PC-9 (cell line): ENCODE measurements at regions of chr1 and their contacts with region 1.

Region 1: DNA sequence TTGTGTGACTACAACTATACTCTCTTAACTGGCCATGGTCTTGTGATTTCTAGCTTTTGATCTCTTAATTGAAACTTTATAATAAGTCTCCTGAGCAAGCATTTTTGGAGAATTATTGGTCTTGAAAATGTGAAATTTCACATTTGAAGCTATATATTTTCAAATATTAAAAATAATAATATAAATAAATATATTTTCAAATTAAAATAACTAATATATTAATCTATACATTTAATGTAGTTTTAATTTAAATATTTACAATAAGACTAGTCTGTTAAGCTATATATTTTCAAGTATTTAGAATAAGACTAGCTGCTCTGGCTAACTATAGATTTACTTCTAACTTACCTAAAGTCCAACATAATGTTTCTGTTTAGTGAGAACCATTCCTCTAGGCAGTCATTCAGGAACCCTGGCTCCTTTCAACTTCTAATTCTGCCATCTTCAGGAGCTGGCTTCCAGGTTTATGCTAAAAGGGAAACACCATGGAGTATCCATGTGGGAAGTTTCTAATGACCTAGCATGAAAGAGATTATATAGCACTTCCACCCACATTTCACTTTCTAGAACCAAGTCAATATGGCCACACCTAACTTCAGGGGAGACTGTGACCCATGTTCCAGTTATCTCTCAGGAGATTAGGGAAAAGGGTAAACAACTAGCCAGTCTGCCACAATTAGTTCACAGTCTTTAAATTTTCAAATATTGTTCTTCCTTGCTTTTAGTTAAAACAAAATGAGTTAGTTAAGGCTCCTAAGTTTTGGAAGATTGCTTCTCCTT is 31.9 kb upstream of the TSHB start:
- DNase-seq: no peak
- H3K4me3 ChIP-seq: no peak overlapping the region
- H3K27ac ChIP-seq: no peak overlapping the region
- H3K4me1 ChIP-seq: peaks cover 9% of the 10 kb centered on the region
- H3K27me3 ChIP-seq: no peaks in the 10 kb centered on the region
- CTCF ChIP-seq: no peak

Region 2: GRCh38 chr1:115036814-115037507 is 39.3 kb after region 1 on chr1:
- CTCF ChIA-PET with region 1: no interaction called
- POLR2A ChIA-PET with region 1: no interaction called
- intact Hi-C with region 1: loop called (anchors 5 kb)
- DNase-seq: no peak
- H3K4me3 ChIP-seq: no peak overlapping the region
- H3K27ac ChIP-seq: no peak overlapping the region
- H3K4me1 ChIP-seq: no peaks in the 10 kb centered on the region
- H3K27me3 ChIP-seq: no peaks in the 10 kb centered on the region
- CTCF ChIP-seq: no peak

Region 3: DNA sequence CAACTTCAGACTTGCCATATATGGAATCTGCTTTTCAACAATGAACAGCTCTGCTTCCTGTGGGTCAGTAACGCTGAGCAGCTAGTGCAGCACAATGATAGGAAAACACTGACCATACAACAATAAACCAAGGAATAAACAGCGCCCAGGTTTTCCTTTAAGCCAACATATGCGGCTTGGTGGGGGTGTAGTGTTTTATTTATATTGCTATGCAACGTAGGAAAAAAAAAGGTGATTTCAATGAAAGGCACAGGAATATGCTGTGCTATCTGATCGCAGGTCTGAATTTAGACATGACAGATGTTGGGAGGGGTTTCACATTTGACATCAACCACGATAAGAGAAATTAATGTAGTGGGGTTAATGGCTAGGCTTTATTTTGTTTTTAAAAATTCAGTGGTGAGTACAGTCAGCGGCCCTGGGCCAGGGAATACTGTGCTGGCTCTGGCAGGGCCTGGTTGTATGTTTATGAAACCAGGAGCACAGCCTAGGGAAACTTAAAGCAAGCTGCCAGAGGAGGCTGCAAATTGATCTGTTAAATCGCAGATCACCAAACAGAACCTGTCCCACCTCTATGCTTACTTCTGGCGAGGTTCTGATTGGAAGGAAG is 87.3 kb after region 1 on chr1:
- CTCF ChIA-PET with region 1: no interaction called
- POLR2A ChIA-PET with region 1: no interaction called
- intact Hi-C with region 1: no loop called
- DNase-seq: peak in 1 of 2 experiments; percentile 32
- H3K4me3 ChIP-seq: no peak overlapping the region
- H3K27ac ChIP-seq: no peak overlapping the region
- H3K4me1 ChIP-seq: peaks cover 10% of the 10 kb centered on the region
- H3K27me3 ChIP-seq: no peaks in the 10 kb centered on the region
- CTCF ChIP-seq: no peak